Caco-2 (cell line): ENCODE measurements at regions of chr11 and their contacts with region 1.

Region 1: GRCh38 chr11:95175818-95176368 is 55.1 kb downstream of the SESN3 start:
- DNase-seq: no peak
- H3K4me3 ChIP-seq: no peak overlapping the region
- H3K4me3 Mint-ChIP-seq: no peak overlapping the region
- H3K27ac Mint-ChIP-seq: no peak overlapping the region
- H3K4me1 ChIP-seq: no peaks in the 10 kb centered on the region
- H3K4me1 Mint-ChIP-seq: no peaks in the 10 kb centered on the region
- H3K27me3 ChIP-seq: no peaks in the 10 kb centered on the region
- H3K27me3 Mint-ChIP-seq: no peaks in the 10 kb centered on the region
- CTCF ChIP-seq: no peak

Region 2: DNA sequence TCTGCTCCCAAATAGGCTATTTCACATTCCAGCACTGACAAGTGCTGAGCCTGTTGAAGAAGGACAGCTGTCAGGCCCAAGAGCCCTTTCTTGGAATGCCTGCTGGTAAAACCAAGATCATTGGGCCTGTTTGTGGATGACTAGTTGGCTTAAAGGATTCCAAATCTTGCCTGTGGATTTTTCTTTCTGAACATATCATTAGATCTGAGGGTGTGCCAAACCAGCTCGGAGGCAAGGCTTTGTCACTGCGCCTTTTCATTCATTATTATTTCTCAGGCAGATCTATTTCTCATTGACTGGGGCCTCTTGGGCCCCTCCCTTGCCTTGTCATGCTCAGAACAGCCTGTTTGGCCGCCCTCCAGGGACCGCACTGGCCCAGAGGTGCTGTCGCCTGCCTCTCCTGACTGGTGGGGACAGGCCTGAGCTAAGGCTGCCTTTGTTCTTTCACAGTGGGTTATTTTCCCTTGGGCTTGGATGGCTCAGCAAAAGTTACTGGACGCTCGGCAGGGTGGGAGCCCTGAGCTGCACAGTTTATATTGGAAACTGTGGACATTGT is 277.8 kb after region 1 on chr11:
- CTCF ChIA-PET with region 1: interaction called, 11 read pairs
- POLR2A ChIA-PET with region 1: no interaction called
- intact Hi-C with region 1: no loop called
- DNase-seq: no peak
- H3K4me3 ChIP-seq: no peak overlapping the region
- H3K4me3 Mint-ChIP-seq: no peak overlapping the region
- H3K27ac Mint-ChIP-seq: no peak overlapping the region
- H3K4me1 ChIP-seq: no peaks in the 10 kb centered on the region
- H3K4me1 Mint-ChIP-seq: no peaks in the 10 kb centered on the region
- H3K27me3 ChIP-seq: no peaks in the 10 kb centered on the region
- H3K27me3 Mint-ChIP-seq: no peaks in the 10 kb centered on the region
- CTCF ChIP-seq: no peak

Region 3: DNA sequence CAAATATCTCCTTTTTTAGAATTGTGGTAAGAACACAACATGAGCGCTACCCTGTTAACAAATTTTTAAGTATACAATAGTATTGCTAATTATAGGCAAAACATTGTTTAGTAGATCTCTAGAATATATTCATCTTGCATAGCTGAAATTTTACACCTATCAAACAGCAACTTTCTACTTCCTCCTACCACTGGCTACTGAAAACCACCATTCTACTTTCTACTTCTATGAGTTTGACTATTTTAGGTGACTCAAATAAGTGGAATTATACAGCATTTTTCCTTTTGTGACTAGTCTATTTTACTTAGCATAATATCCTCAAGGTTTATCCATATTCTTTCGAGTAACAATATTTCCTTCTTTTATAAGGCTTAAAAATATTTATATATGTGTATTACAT is 485.3 kb after region 1 on chr11:
- CTCF ChIA-PET with region 1: interaction called, 10 read pairs
- POLR2A ChIA-PET with region 1: no interaction called
- intact Hi-C with region 1: no loop called
- DNase-seq: no peak
- H3K4me3 ChIP-seq: no peak overlapping the region
- H3K4me3 Mint-ChIP-seq: no peak overlapping the region
- H3K27ac Mint-ChIP-seq: no peak overlapping the region
- H3K4me1 ChIP-seq: no peaks in the 10 kb centered on the region
- H3K4me1 Mint-ChIP-seq: no peaks in the 10 kb centered on the region
- H3K27me3 ChIP-seq: no peaks in the 10 kb centered on the region
- H3K27me3 Mint-ChIP-seq: peaks cover 21% of the 10 kb centered on the region
- CTCF ChIP-seq: no peak